ENCODE measurements at regions of chr2 and their contacts with region 1.

Region 1: DNA sequence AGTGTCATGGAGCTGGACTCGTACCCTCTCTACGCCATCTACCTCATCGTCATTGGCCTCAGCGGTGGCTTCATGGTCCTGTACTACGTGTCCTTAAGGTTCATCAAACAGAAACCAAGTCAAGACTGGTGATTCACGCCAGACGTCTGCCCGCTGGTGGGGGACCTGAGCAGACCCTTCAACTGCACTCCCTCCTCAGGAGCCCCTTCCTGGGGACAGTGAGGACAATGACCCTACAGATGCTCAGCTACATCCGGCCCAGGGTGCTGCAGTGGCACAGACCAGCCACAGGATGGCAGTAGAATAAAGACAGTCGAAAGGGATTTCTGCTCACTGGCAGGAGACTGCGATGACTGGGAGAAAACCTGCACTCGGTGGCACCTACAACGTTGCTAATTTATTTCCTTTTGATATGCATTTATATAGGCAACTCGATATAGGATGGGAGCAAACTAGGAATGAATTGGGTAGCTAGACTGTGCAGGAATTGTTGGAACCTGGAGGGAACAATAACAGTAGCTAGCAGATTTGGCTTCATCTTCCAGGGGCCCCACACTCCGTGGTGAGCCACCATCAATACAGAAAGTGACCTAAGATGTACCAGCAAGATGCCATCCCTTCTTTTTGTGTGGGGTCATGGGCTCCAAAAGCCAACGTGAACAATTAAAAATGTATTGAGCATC is 39.2 kb downstream of the ABCG8 start:
- DNase-seq: peak; percentile 81
- ATAC-seq: peak; percentile 96
- H3K4me3 Mint-ChIP-seq: no peak overlapping the region
- H3K27ac Mint-ChIP-seq: no peak overlapping the region
- H3K4me1 Mint-ChIP-seq: peaks cover 2% of the 10 kb centered on the region
- H3K27me3 Mint-ChIP-seq: peaks cover 6% of the 10 kb centered on the region
- CTCF ChIP-seq: peak; percentile 98

Region 2: GRCh38 chr2:43611987-43612894 is 265.7 kb before region 1 on chr2:
- CTCF ChIA-PET with region 1: interaction called, 5 read pairs
- POLR2A ChIA-PET with region 1: no interaction called
- intact Hi-C with region 1: loop called (anchors 10 kb)
- DNase-seq: peak; percentile 85
- ATAC-seq: peak; percentile 93
- H3K4me3 Mint-ChIP-seq: no peak overlapping the region
- H3K27ac Mint-ChIP-seq: no peak overlapping the region
- H3K4me1 Mint-ChIP-seq: no peaks in the 10 kb centered on the region
- H3K27me3 Mint-ChIP-seq: no peaks in the 10 kb centered on the region
- CTCF ChIP-seq: peak; percentile 75

Region 3: GRCh38 chr2:43737097-43737854 is 140.6 kb before region 1 on chr2:
- CTCF ChIA-PET with region 1: no interaction called
- POLR2A ChIA-PET with region 1: no interaction called
- intact Hi-C with region 1: no loop called
- DNase-seq: no peak
- ATAC-seq: no peak
- H3K4me3 Mint-ChIP-seq: no peak overlapping the region
- H3K27ac Mint-ChIP-seq: no peak overlapping the region
- H3K4me1 Mint-ChIP-seq: no peaks in the 10 kb centered on the region
- H3K27me3 Mint-ChIP-seq: peaks cover 11% of the 10 kb centered on the region
- CTCF ChIP-seq: no peak

Region 4: DNA sequence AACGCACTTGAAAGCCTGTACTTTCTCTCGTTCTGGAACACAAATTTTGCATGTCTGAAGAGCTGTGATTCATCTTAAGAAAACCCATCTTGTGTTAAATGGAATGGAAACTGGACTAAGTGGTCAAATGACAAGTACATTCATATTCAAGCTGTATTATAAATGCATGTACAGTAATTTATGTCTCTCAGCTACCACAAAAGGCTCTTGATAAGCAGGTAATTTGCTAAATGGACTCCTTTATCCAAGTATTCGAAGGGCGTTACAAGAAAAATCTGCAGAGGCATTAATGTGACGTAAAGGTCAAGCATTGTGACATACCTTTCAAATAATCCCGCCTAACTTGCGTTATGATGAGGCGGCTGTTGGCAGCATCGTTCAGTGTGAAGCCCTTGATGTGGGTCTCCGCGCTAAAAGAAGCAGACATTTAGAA is 27.5 kb after region 1 on chr2:
- CTCF ChIA-PET with region 1: interaction called, 15 read pairs
- POLR2A ChIA-PET with region 1: no interaction called
- intact Hi-C with region 1: no loop called
- DNase-seq: no peak
- ATAC-seq: peak; percentile 34
- H3K4me3 Mint-ChIP-seq: no peak overlapping the region
- H3K27ac Mint-ChIP-seq: no peak overlapping the region
- H3K4me1 Mint-ChIP-seq: peaks cover 17% of the 10 kb centered on the region
- H3K27me3 Mint-ChIP-seq: no peaks in the 10 kb centered on the region
- CTCF ChIP-seq: no peak

Region 5: GRCh38 chr2:44167940-44168680 is 290.2 kb after region 1 on chr2:
- CTCF ChIA-PET with region 1: no interaction called
- POLR2A ChIA-PET with region 1: no interaction called
- intact Hi-C with region 1: no loop called
- DNase-seq: peak; percentile 100
- ATAC-seq: peak; percentile 80
- H3K4me3 Mint-ChIP-seq: peak overlapping the region; percentile 89
- H3K27ac Mint-ChIP-seq: peak overlapping the region; percentile 99
- H3K4me1 Mint-ChIP-seq: peaks cover 27% of the 10 kb centered on the region
- H3K27me3 Mint-ChIP-seq: no peaks in the 10 kb centered on the region
- CTCF ChIP-seq: no peak

Measured in activated CD8-positive, alpha-beta T cell treated with anti-CD3 and anti-CD28 coated beads for 36 hours (primary cell).